Tibial artery (tissue), 4 donors: ENCODE measurements at regions of chr1 and their contacts with region 1.

Region 1: DNA sequence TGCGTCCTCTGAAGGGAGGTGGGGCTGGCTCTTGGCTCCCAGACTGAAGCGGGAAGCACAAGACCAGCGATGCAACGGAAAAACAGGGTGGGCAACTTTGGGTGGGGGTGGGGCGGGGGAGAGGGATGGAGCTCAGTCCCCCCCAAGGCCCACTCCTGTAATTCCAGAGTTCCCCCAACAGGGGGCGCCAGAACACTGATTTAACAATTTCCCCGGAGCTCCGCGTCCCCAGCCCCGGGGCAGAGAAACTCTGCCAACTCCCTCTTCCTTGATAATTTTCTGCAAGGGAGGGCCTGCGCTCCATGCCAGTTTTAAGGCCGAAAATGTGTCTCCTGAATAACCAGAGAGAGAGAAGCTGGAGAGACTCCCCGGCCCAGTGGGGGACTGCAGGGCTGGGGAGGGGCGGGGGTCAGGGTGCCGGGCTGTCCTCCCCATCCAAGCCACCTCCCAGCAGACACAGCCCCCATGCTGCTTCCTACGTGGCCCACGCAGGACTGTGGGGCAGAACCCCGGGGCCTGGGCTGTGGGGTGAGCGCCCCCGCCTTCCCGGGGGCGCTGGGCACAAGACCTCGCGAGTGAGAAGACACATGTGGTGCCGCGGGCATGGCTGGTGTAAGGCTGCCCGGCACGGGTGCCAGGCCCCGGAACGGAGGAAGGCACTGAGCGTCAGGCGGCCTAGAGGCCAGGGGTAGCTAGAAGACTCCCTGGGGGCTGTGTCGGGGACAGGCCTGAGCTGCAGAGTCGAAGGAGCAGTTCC is 51.4 kb downstream of the KIF21B start:
- DNase-seq: peak; percentile 58 to 80
- H3K4me3 ChIP-seq: no peak overlapping the region
- H3K27ac ChIP-seq: no peak overlapping the region
- H3K4me1 ChIP-seq: peaks cover 0 to 16% (median 9%) of the 10 kb centered on the region in 4 donors
- H3K27me3 ChIP-seq: no peaks in the 10 kb centered on the region
- CTCF ChIP-seq: peak; percentile 71 to 92

Region 2: GRCh38 chr1:200510228-200510623 is 461.9 kb before region 1 on chr1:
- intact Hi-C with region 1: no loop called
- DNase-seq: peak; percentile 71 to 76
- H3K4me3 ChIP-seq: no peak overlapping the region
- H3K27ac ChIP-seq: no peak overlapping the region
- H3K4me1 ChIP-seq: no peaks in the 10 kb centered on the region
- H3K27me3 ChIP-seq: peaks cover 0 to 12% of the 10 kb centered on the region in 2 donors
- CTCF ChIP-seq: peak; percentile 69 to 93

Region 3: DNA sequence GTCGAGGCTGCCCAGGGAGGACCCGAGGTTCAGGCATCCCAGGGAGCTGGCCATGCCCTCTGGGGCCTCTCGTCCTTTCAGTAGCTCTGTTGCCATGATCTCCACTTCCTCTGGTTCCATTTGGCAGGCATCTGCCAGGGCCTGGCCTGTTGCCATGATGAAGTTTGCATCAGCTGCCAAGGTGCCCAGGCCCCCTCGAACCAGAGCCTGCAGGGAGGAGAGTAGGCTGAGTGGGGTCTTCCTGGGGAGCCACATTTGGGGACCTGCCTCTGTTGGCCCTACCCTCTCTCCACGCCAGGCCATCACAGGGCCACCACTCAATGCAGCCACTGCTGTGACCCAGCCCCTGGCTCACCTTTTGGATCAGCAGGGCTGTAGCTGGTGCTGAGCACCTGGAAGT is 67.7 kb after region 1 on chr1:
- intact Hi-C with region 1: loop called (anchors 1 kb)
- DNase-seq: no peak
- H3K4me3 ChIP-seq: no peak overlapping the region
- H3K27ac ChIP-seq: no peak overlapping the region
- H3K4me1 ChIP-seq: peaks cover 0 to 6% (median 0%) of the 10 kb centered on the region in 4 donors
- H3K27me3 ChIP-seq: peaks cover 0 to 7% of the 10 kb centered on the region in 2 donors
- CTCF ChIP-seq: no peak

Region 4: DNA sequence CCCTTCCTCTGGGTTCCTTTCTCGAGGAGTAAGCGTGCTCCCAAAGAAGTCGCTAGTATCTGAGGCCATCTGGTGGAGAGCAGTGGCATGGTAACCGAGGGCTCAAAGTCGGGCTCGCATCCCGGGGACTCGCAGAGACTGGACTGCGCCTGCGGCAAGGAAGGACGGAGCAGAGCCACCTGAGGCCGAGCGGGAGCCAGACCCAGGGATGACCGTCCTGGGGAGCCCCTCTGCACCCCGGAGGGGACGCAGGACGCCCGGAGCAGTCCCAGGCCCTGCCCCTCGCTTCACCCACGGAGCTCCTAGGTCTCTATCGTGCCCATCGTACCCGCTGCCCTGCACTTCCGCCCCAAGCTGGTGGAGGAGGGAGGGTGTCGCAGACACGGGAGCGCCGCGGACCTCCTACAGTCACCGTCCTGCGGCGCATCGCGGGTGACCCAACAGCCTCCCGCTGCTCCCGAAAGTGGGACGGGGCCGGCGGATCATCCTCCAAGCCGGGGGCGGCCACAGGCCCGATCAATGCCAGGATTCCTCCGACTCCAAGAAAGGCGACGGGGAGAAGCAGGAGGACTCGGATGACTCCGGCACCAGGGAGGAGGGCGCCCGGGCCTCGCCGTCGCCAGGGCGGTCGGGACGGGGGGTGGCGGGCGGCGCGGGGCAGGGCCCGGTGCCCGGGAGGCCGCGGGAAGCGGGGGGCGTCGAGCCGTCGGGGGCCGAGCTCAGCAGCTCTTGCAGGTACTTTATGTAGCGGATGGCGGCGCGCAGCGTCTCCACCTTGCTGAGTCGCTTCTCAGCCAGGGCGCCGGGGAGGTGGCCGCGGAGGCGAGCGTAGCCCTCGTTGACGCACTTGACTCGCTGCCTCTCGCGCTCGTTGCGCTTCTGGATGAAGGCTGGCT is 142.4 kb after region 1 on chr1:
- intact Hi-C with region 1: loop called (anchors 5 kb)
- DNase-seq: peak; percentile 86 to 92
- H3K4me3 ChIP-seq: peak overlapping the region; percentile 52 to 60
- H3K27ac ChIP-seq: peak overlapping the region; percentile 67 to 73
- H3K4me1 ChIP-seq: peaks cover 0 to 12% (median 6%) of the 10 kb centered on the region in 4 donors
- H3K27me3 ChIP-seq: peaks cover 0 to 4% of the 10 kb centered on the region in 2 donors
- CTCF ChIP-seq: peak; percentile 82 to 90

Region 5: GRCh38 chr1:201229771-201230635 is 257.9 kb after region 1 on chr1:
- intact Hi-C with region 1: loop called (anchors 10 kb)
- DNase-seq: no peak
- H3K4me3 ChIP-seq: no peak overlapping the region
- H3K27ac ChIP-seq: no peak overlapping the region
- H3K4me1 ChIP-seq: no peaks in the 10 kb centered on the region
- H3K27me3 ChIP-seq: peaks cover 0 to 20% of the 10 kb centered on the region in 2 donors
- CTCF ChIP-seq: no peak